B cell (primary cell): ENCODE measurements at regions of chr21 and their contacts with region 1.

Region 1: GRCh38 chr21:39349211-39350093 is 564 bp upstream of the HMGN1 start:
- DNase-seq: peak; percentile 98
- ATAC-seq: peak; percentile 82
- H3K4me3 ChIP-seq: peak overlapping the region; percentile 42 to 89 (median 81)
- H3K4me3 Mint-ChIP-seq: peak overlapping the region; percentile 98
- H3K27ac ChIP-seq: peak overlapping the region; percentile 67 to 77
- H3K27ac Mint-ChIP-seq: peak overlapping the region; percentile 99
- H3K4me1 ChIP-seq: peaks cover 18 to 25% of the 10 kb centered on the region in 2 donors
- H3K4me1 Mint-ChIP-seq: peaks cover 31% of the 10 kb centered on the region
- H3K27me3 ChIP-seq: no peaks in the 10 kb centered on the region
- H3K27me3 Mint-ChIP-seq: peaks cover 7% of the 10 kb centered on the region
- CTCF ChIP-seq: no peak

Region 2: DNA sequence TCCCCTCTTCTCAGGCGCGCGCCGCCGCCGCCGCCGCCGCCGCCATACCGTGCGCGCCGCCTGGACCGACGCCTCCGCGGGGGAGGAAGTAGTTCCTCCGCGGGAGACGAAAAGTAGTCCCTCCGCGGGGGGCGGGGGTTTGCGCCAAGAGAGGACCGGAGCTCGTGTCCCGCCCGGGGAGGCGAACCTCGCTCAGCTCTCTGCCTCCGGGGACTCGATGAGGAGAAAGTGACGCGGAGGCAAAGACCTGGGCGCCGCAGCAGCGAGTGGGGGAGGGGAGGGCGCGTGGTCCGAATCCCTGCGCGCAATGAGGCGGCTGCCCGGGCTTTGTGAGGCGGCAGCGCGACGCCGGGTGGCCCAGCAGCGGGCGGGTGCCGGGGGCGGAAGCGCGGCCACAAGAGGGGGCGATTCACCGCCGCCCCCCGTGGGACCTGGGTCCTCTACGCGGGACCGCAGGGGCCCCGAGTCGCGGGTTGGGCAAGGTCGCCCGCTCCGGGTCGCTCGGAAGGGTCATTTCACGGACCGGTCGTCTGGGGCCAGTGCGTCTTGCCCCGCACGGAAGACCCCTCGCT is 35.8 kb before region 1 on chr21 and contains the start of gene BRWD1:
- CTCF ChIA-PET with region 1: interaction called, 5 read pairs
- POLR2A ChIA-PET with region 1: interaction called, 47 read pairs
- intact Hi-C with region 1: loop called (anchors 1 kb)
- DNase-seq: peak; percentile 97
- ATAC-seq: peak; percentile 52
- H3K4me3 ChIP-seq: peak within 1 kb of the TSS; percentile 50 to 83 (median 72)
- H3K4me3 Mint-ChIP-seq: peak within 1 kb of the TSS; percentile 95
- H3K27ac ChIP-seq: peak within 1 kb of the TSS; percentile 57 to 84
- H3K27ac Mint-ChIP-seq: peak within 1 kb of the TSS; percentile 90
- H3K4me1 ChIP-seq: peaks cover 11 to 29% of the 10 kb centered on the region in 2 donors
- H3K4me1 Mint-ChIP-seq: peaks cover 43% of the 10 kb centered on the region
- H3K27me3 ChIP-seq: no peaks in the 10 kb centered on the region
- H3K27me3 Mint-ChIP-seq: no peaks in the 10 kb centered on the region
- CTCF ChIP-seq: peak; percentile 55
- total RNA-seq, gene BRWD1: 90.8 and 93.9 TPM in 2 replicates

Region 3: DNA sequence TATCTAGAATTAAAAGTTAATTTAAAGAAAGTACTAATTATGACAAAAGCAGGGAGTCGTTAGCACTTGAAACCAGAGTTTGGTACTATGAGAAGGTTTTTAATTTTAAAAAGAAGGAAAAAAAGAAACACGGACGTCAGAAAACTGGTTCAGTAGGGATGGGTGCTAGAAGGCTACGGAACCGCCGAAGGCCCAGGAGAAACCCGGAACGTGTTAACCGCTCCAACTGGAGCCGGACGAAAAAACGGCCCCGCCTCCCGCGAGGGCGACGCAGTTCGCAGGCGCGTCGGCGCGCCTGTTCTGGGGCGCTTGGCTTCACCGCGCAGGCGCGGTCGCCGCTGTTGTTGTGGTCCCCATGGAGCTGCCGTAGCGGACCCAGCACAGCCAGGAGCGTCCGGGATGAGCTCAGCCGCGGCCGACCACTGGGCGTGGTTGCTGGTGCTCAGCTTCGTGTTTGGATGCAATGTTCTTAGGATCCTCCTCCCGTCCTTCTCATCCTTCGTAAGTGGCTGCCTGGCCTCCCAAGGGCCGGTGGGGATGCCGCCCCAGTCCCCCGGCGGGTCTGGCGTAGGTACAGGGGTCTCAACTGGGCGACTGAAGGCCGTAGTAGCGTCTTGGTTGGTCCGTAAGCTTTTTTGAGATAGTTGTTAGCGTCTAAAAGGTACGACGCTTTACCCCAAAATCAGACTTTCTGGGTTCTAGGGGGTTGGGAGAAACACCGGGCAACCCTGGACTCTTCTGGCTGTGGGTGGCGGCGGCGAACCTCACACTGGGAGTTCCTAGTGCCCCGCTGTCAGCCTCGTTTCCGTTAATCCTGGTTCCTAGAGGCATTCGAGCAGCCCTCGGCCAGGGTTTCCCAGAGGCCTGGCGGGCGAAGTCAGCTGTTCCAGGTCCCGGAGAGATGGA is 30.8 kb after region 1 on chr21:
- CTCF ChIA-PET with region 1: no interaction called
- POLR2A ChIA-PET with region 1: interaction called, 7 read pairs
- intact Hi-C with region 1: loop called (anchors 1 kb)
- DNase-seq: peak; percentile 90
- ATAC-seq: peak; percentile 98
- H3K4me3 ChIP-seq: peak overlapping the region; percentile 73 to 97 (median 92)
- H3K4me3 Mint-ChIP-seq: peak overlapping the region; percentile 93
- H3K27ac ChIP-seq: peak overlapping the region; percentile 61 to 81
- H3K27ac Mint-ChIP-seq: peak overlapping the region; percentile 90
- H3K4me1 ChIP-seq: peaks cover 10 to 16% of the 10 kb centered on the region in 2 donors
- H3K4me1 Mint-ChIP-seq: peaks cover 19% of the 10 kb centered on the region
- H3K27me3 ChIP-seq: peaks cover 0 to 6% (median 0%) of the 10 kb centered on the region in 4 experiments
- H3K27me3 Mint-ChIP-seq: no peaks in the 10 kb centered on the region
- CTCF ChIP-seq: no peak

Region 4: GRCh38 chr21:39388038-39388810 is 38.8 kb after region 1 on chr21:
- CTCF ChIA-PET with region 1: interaction called, 7 read pairs
- POLR2A ChIA-PET with region 1: interaction called, 8 read pairs
- intact Hi-C with region 1: loop called (anchors 1 kb)
- DNase-seq: peak; percentile 88
- ATAC-seq: peak; percentile 84
- H3K4me3 ChIP-seq: peak overlapping the region; percentile 38 to 63 (median 56)
- H3K4me3 Mint-ChIP-seq: peak overlapping the region; percentile 94
- H3K27ac ChIP-seq: peak overlapping the region; percentile 20 to 25
- H3K27ac Mint-ChIP-seq: peak overlapping the region; percentile 89
- H3K4me1 ChIP-seq: peaks cover 11 to 18% of the 10 kb centered on the region in 2 donors
- H3K4me1 Mint-ChIP-seq: peaks cover 24% of the 10 kb centered on the region
- H3K27me3 ChIP-seq: no peaks in the 10 kb centered on the region
- H3K27me3 Mint-ChIP-seq: no peaks in the 10 kb centered on the region
- CTCF ChIP-seq: peak; percentile 97

Region 5: GRCh38 chr21:39445321-39446269 is 96.1 kb after region 1 on chr21 and contains the start of gene LCA5L:
- CTCF ChIA-PET with region 1: no interaction called
- POLR2A ChIA-PET with region 1: interaction called, 3 read pairs
- intact Hi-C with region 1: loop called (anchors 1 kb)
- DNase-seq: peak; percentile 95
- ATAC-seq: peak; percentile 88
- H3K4me3 ChIP-seq: peak within 1 kb of the TSS; percentile 16 to 84 (median 81)
- H3K4me3 Mint-ChIP-seq: peak within 1 kb of the TSS; percentile 97
- H3K27ac ChIP-seq: peak within 1 kb of the TSS; percentile 76 to 88
- H3K27ac Mint-ChIP-seq: peak within 1 kb of the TSS; percentile 99
- H3K4me1 ChIP-seq: peaks cover 6 to 13% of the 10 kb centered on the region in 2 donors
- H3K4me1 Mint-ChIP-seq: peaks cover 12% of the 10 kb centered on the region
- H3K27me3 ChIP-seq: peaks cover 0 to 3% (median 0%) of the 10 kb centered on the region in 4 experiments
- H3K27me3 Mint-ChIP-seq: peaks cover 23% of the 10 kb centered on the region
- CTCF ChIP-seq: peak; percentile 26
- total RNA-seq, gene LCA5L: 0.39 and 0.62 TPM in 2 replicates